Activated naive CD4-positive, alpha-beta T cell treated with anti-CD3 and anti-CD28 coated beads for 36 hours (primary cell): ENCODE measurements at regions of chr7 and their contacts with region 1.

Region 1: DNA sequence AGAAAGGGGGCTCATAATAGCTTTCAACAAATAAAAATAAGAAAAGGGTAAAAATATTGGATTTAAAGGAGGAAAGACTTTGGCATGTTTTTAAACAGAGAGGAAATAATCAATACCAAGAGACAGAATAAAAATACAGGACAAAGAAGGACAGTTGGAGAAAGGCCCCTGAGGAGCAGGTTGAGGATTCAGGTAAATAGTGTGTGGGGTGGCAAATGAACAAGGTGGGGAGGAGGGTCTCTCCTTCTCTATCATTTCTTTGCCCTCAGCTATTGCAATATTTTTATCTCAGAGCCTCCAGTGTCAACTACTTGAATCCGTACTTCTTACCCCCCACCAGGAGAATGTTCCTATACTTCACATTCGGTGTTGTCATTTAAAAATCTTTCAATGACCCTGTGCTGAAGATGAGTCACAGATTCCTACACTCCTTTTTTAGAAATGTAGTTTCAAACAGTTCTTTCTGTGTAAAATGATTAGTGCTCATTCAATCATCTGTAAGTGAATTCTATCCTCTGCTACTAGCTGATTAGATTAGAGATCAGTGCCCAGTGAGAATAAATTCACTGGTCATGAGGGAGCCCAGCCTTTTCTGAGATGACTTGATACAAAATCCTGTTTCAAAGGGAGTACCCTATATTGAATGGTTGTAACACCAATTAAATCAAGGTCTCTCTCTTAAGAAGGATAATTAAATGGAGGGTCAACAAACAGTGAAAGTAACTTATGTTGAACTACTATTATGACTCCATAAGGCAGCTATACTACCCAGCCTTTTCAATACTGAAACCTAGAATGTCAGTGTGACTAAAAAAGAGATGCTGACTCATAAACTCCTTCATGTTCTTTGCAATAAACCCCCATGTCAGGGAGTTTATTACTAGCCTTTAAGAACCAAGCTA is 50.4 kb upstream of the WNT16 start:
- DNase-seq: no peak
- H3K4me3 Mint-ChIP-seq: no peak overlapping the region
- H3K27ac Mint-ChIP-seq: peak overlapping the region; percentile 28
- H3K4me1 Mint-ChIP-seq: peaks cover 15% of the 10 kb centered on the region
- H3K27me3 Mint-ChIP-seq: peaks cover 34% of the 10 kb centered on the region

Region 2: GRCh38 chr7:120877701-120878100 is 400.7 kb before region 1 on chr7:
- CTCF ChIA-PET with region 1: no interaction called
- intact Hi-C with region 1: no loop called
- DNase-seq: no peak
- H3K4me3 Mint-ChIP-seq: no peak overlapping the region
- H3K27ac Mint-ChIP-seq: no peak overlapping the region
- H3K4me1 Mint-ChIP-seq: no peaks in the 10 kb centered on the region
- H3K27me3 Mint-ChIP-seq: peaks cover 13% of the 10 kb centered on the region

Region 3: GRCh38 chr7:121138262-121138933 is 140.0 kb before region 1 on chr7:
- CTCF ChIA-PET with region 1: no interaction called
- intact Hi-C with region 1: loop called (anchors 1 kb)
- DNase-seq: peak; percentile 24
- H3K4me3 Mint-ChIP-seq: no peak overlapping the region
- H3K27ac Mint-ChIP-seq: no peak overlapping the region
- H3K4me1 Mint-ChIP-seq: peaks cover 16% of the 10 kb centered on the region
- H3K27me3 Mint-ChIP-seq: peaks cover 5% of the 10 kb centered on the region